PC-9 (cell line): ENCODE measurements at regions of chr4 and their contacts with region 1.

Region 1: DNA sequence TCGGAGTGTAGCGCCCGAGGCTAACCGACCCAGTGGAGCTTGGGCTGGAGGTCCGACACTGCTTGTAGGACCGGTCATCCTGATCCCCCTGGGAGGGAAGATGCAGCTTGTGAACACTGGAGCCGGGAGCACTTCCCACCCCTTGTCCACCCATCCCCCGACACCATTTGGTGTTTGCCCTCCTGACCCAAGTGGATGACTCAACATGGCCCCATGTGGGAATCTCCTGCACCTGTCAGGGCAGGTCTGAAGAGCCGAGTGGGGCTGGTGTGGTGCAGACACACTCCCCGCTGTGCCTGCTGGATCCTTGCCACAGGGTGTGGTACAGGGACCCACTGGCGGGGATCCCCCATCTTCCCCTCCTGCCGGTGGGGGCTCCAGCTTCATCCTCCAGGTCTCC is 90.0 kb upstream of the AFAP1 start:
- DNase-seq: peak; percentile 36 to 50
- H3K4me3 ChIP-seq: no peak overlapping the region
- H3K27ac ChIP-seq: no peak overlapping the region
- H3K4me1 ChIP-seq: no peaks in the 10 kb centered on the region
- H3K27me3 ChIP-seq: no peaks in the 10 kb centered on the region
- CTCF ChIP-seq: no peak

Region 2: DNA sequence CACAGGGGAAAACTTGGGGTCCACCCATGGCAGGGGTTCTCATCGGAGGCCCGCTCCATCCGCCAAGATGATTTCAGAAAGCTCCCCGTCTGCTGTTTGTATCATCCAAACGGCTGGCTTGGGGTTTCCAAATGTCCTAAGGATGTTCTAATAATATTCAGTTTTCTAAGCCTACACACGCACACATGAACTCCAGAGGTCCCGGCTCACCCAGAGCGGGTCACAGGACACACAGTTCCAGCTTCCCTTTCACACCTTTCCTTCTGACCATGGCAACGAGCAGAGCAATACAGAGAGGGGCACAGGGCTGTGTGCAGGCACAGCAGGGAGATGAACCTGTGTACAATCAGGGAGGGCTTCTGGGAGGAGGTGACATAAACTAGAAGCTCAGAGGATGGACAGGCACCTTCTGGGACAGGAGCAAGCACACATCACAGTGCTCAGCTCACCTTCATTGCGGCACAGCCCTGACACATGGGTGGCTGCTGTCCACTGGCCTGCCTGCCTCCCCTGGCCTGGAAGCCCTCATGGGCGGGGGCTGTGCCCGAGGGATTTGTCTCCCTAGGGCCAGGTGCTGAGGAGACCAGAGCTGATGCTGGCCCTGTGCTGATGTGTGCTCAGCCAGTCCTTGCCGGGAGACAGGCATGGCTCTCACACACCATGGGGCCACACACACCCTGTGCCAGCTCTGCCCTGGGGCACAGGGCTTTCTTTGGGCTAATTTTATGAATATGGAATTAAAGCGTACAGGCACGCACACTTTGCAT is 84.1 kb after region 1 on chr4:
- CTCF ChIA-PET with region 1: no interaction called
- POLR2A ChIA-PET with region 1: interaction called, 26 read pairs
- intact Hi-C with region 1: no loop called
- DNase-seq: no peak
- H3K4me3 ChIP-seq: no peak overlapping the region
- H3K27ac ChIP-seq: no peak overlapping the region
- H3K4me1 ChIP-seq: no peaks in the 10 kb centered on the region
- H3K27me3 ChIP-seq: peaks cover 5% of the 10 kb centered on the region; the same call in 1 of the 2 replicates
- CTCF ChIP-seq: no peak

Region 3: GRCh38 chr4:8167829-8168228 is 138.1 kb after region 1 on chr4:
- CTCF ChIA-PET with region 1: interaction called, 15 read pairs
- POLR2A ChIA-PET with region 1: no interaction called
- intact Hi-C with region 1: no loop called
- DNase-seq: peak in 1 of 2 experiments; percentile 73
- H3K4me3 ChIP-seq: no peak overlapping the region
- H3K27ac ChIP-seq: peak overlapping the region; percentile 68
- H3K4me1 ChIP-seq: peaks cover 11% of the 10 kb centered on the region
- H3K27me3 ChIP-seq: no peaks in the 10 kb centered on the region
- CTCF ChIP-seq: no peak